Adrenal gland (tissue), 19 donors: ENCODE measurements at regions of chr10 and their contacts with region 1.

Region 1: GRCh38 chr10:98664331-98665042 is 217.8 kb upstream of the HPS1 start:
- DNase-seq: peak in 4 of 7 donors; percentile 9 to 36 (median 26)
- H3K4me3 ChIP-seq: no peak overlapping the region
- H3K27ac ChIP-seq: no peak overlapping the region
- H3K4me1 ChIP-seq: no peaks in the 10 kb centered on the region
- H3K27me3 ChIP-seq: no peaks in the 10 kb centered on the region
- CTCF ChIP-seq: peak in 5 of 6 experiments; percentile 29 to 58 (median 55)
- POLR2A ChIP-seq: no peak

Region 2: GRCh38 chr10:98331885-98332284 is 332.6 kb before region 1 on chr10:
- intact Hi-C with region 1: no loop called
- DNase-seq: no peak
- H3K4me3 ChIP-seq: no peak overlapping the region
- H3K27ac ChIP-seq: no peak overlapping the region
- H3K4me1 ChIP-seq: peaks cover 11 to 16% of the 10 kb centered on the region in 2 donors
- H3K27me3 ChIP-seq: no peaks in the 10 kb centered on the region
- CTCF ChIP-seq: peak in 1 of 6 experiments; percentile 20
- POLR2A ChIP-seq: no peak

Region 3: GRCh38 chr10:98474628-98475027 is 189.9 kb before region 1 on chr10:
- intact Hi-C with region 1: loop called in 1 of 2 experiments (anchors 5 kb)
- DNase-seq: no peak
- H3K4me3 ChIP-seq: no peak overlapping the region
- H3K27ac ChIP-seq: no peak overlapping the region
- H3K4me1 ChIP-seq: no peaks in the 10 kb centered on the region
- H3K27me3 ChIP-seq: no peaks in the 10 kb centered on the region
- CTCF ChIP-seq: no peak
- POLR2A ChIP-seq: no peak

Region 4: GRCh38 chr10:98567391-98568133 is 96.9 kb before region 1 on chr10:
- intact Hi-C with region 1: no loop called
- DNase-seq: no peak
- H3K4me3 ChIP-seq: no peak overlapping the region
- H3K27ac ChIP-seq: no peak overlapping the region
- H3K4me1 ChIP-seq: no peaks in the 10 kb centered on the region
- H3K27me3 ChIP-seq: no peaks in the 10 kb centered on the region
- CTCF ChIP-seq: no peak
- POLR2A ChIP-seq: no peak

Region 5: DNA sequence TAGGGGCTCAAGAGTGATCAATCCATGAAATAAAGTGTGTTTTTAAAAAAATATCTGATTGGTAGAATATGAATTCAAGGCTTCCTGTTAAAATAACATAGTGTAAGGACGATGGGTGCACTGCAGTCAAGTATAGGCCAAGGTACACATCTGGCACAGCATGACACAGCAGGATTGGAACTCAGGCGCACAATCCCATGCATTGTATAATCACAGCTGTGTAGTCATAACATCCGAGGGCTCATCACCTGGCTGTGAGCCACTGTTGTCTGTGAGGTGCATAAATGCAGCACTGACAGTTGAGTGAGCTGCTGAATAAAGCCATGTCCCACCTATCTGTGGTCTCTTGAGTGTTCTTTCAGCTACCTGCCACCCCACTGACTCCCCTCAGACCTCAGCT is 75.5 kb before region 1 on chr10:
- intact Hi-C with region 1: no loop called
- DNase-seq: no peak
- H3K4me3 ChIP-seq: no peak overlapping the region
- H3K27ac ChIP-seq: peak overlapping the region in 2 of 5 donors; percentile 6 to 32
- H3K4me1 ChIP-seq: no peaks in the 10 kb centered on the region
- H3K27me3 ChIP-seq: no peaks in the 10 kb centered on the region
- CTCF ChIP-seq: no peak
- POLR2A ChIP-seq: no peak